Activated T-helper 2 cell treated with anti-CD3 and anti-CD28 coated beads, Interferon-gamma antibody, Interleukin-2, Interleukin-4, amounts not matched to agents 10 μg/mL and 5 μg/mL and 100 μg/mL, durations not matched to agents 14 hours and 24 hours and 36 hours (primary cell): ENCODE measurements at regions of chr4 and their contacts with region 1.

Region 1: GRCh38 chr4:10730590-10730989 is 46.0 kb upstream of the CLNK start:
- DNase-seq: no peak
- H3K4me3 Mint-ChIP-seq: peak overlapping the region; percentile 17
- H3K27ac Mint-ChIP-seq: peak overlapping the region; percentile 90
- H3K4me1 Mint-ChIP-seq: peaks cover 76% of the 10 kb centered on the region
- H3K27me3 Mint-ChIP-seq: no peaks in the 10 kb centered on the region

Region 2: DNA sequence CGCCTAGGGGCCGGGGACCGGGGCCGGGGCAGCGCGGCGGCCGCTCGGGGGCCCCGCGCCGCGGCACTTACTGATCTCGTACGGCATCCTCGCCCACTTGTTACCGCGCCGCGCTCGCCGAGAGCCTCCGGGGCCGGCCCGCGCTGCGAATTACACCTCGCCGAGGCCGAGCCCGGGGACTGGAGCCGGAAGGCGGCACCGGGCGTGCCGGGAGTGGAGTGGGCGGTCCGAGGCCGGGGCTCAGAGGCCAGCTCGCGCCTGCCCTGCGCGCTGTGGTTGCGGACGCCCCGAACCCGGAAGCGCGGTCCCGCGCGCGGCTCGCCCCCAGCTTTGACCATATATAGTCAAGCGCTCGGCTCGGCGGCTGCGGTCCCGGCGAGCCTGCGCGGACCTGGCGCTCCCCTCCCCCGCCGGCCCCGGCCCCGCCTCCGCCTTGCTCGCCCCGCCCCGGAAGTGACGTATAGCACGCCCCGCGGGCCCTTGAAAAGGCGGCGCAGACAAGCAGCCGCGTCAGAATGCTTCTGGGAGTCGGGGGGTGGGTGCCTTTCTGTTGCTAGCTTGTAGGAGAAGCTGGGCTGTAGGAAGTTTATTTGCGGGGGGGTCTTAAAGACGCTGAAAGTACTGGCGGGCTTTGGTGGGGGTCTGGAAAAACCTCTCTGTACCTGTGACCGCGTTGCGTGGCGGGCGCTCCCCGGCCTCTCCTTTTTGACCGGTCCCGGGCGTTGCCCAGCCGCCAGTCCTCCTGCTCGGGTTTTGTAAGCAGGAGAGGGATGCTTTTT is 613.8 kb before region 1 on chr4 and contains the start of gene WDR1:
- intact Hi-C with region 1: loop called (anchors 5 kb)
- DNase-seq: peak; percentile 90
- H3K4me3 Mint-ChIP-seq: peak within 1 kb of the TSS; percentile 93
- H3K27ac Mint-ChIP-seq: peak within 1 kb of the TSS; percentile 96
- H3K4me1 Mint-ChIP-seq: peaks cover 65% of the 10 kb centered on the region
- H3K27me3 Mint-ChIP-seq: no peaks in the 10 kb centered on the region
- total RNA-seq, gene WDR1: 387 and 398 TPM in 2 replicates

Region 3: GRCh38 chr4:10253755-10254154 is 476.8 kb before region 1 on chr4:
- intact Hi-C with region 1: no loop called
- DNase-seq: no peak
- H3K4me3 Mint-ChIP-seq: no peak overlapping the region
- H3K27ac Mint-ChIP-seq: no peak overlapping the region
- H3K4me1 Mint-ChIP-seq: no peaks in the 10 kb centered on the region
- H3K27me3 Mint-ChIP-seq: peaks cover 3% of the 10 kb centered on the region

Region 4: GRCh38 chr4:10582059-10582686 is 148.4 kb before region 1 on chr4:
- intact Hi-C with region 1: loop called (anchors 5 kb)
- DNase-seq: no peak
- H3K4me3 Mint-ChIP-seq: no peak overlapping the region
- H3K27ac Mint-ChIP-seq: no peak overlapping the region
- H3K4me1 Mint-ChIP-seq: peaks cover 28% of the 10 kb centered on the region
- H3K27me3 Mint-ChIP-seq: peaks cover 3% of the 10 kb centered on the region

Region 5: GRCh38 chr4:10783351-10783750 is 52.8 kb after region 1 on chr4:
- intact Hi-C with region 1: loop called (anchors 2 kb)
- DNase-seq: no peak
- H3K4me3 Mint-ChIP-seq: no peak overlapping the region
- H3K27ac Mint-ChIP-seq: peak overlapping the region; percentile 7
- H3K4me1 Mint-ChIP-seq: peaks cover 18% of the 10 kb centered on the region
- H3K27me3 Mint-ChIP-seq: no peaks in the 10 kb centered on the region

Region 6: GRCh38 chr4:10917566-10917965 is 187.0 kb after region 1 on chr4:
- intact Hi-C with region 1: no loop called
- DNase-seq: no peak
- H3K4me3 Mint-ChIP-seq: no peak overlapping the region
- H3K27ac Mint-ChIP-seq: no peak overlapping the region
- H3K4me1 Mint-ChIP-seq: peaks cover 12% of the 10 kb centered on the region
- H3K27me3 Mint-ChIP-seq: peaks cover 9% of the 10 kb centered on the region

Region 7: GRCh38 chr4:10949039-10949733 is 218.6 kb after region 1 on chr4:
- intact Hi-C with region 1: loop called (anchors 2 kb)
- DNase-seq: no peak
- H3K4me3 Mint-ChIP-seq: no peak overlapping the region
- H3K27ac Mint-ChIP-seq: no peak overlapping the region
- H3K4me1 Mint-ChIP-seq: peaks cover 3% of the 10 kb centered on the region
- H3K27me3 Mint-ChIP-seq: peaks cover 24% of the 10 kb centered on the region

Region 8: DNA sequence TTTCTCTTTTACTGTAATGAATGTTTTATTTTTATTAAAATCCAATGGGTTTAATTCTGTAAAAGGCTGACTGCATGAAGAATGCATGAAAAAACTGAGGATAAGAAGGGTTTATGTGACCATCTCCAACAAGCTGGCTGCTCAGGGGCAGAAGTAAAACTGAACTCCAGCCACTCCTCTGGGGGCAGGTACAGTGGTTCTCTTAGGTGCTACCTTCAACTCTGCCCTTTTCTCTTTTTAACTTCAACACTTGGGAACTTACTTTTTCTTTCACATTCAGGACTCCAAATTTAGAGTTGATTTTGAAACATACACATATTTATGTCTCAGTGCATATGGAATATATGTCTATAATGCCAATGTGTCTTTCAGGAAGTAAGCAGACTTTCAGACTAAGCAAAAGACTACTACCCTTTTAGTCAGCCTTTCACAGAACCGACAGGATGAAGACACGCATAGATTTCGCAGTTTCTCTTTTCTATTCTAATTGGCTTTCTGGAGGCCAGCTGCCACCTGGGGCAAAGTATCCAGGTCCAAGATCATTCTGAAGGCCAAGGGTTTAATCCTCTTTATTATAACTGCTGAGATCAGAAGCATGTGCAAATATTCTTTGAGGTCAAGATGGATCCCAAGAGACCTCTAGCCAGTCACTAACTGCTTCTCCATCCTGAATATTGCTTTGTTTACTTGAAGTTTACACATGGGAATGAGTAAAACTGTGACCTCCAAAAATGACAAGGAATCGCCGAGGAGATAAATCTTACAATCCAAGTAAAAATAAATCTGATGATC is 667.4 kb after region 1 on chr4:
- intact Hi-C with region 1: no loop called
- DNase-seq: no peak
- H3K4me3 Mint-ChIP-seq: no peak overlapping the region
- H3K27ac Mint-ChIP-seq: no peak overlapping the region
- H3K4me1 Mint-ChIP-seq: peaks cover 2% of the 10 kb centered on the region
- H3K27me3 Mint-ChIP-seq: no peaks in the 10 kb centered on the region